ENCODE measurements at regions of chr6 and their contacts with region 1.

Region 1: GRCh38 chr6:28586962-28587745 is 61.5 kb downstream of the GPX5 start:
- DNase-seq: peak; percentile 87
- H3K4me3 Mint-ChIP-seq: peak overlapping the region; percentile 85
- H3K27ac Mint-ChIP-seq: peak overlapping the region; percentile 38
- H3K4me1 Mint-ChIP-seq: peaks cover 30% of the 10 kb centered on the region
- H3K27me3 Mint-ChIP-seq: peaks cover 63% of the 10 kb centered on the region

Region 2: GRCh38 chr6:28218271-28219248 is 368.6 kb before region 1 on chr6:
- intact Hi-C with region 1: loop called (anchors 5 kb)
- DNase-seq: peak; percentile 68
- H3K4me3 Mint-ChIP-seq: peak overlapping the region; percentile 82
- H3K27ac Mint-ChIP-seq: no peak overlapping the region
- H3K4me1 Mint-ChIP-seq: peaks cover 10% of the 10 kb centered on the region
- H3K27me3 Mint-ChIP-seq: peaks cover 67% of the 10 kb centered on the region

Region 3: GRCh38 chr6:28355743-28356665 is 231.2 kb before region 1 on chr6:
- intact Hi-C with region 1: no loop called
- DNase-seq: peak; percentile 91
- H3K4me3 Mint-ChIP-seq: peak overlapping the region; percentile 93
- H3K27ac Mint-ChIP-seq: peak overlapping the region; percentile 79
- H3K4me1 Mint-ChIP-seq: peaks cover 16% of the 10 kb centered on the region
- H3K27me3 Mint-ChIP-seq: no peaks in the 10 kb centered on the region

Region 4: DNA sequence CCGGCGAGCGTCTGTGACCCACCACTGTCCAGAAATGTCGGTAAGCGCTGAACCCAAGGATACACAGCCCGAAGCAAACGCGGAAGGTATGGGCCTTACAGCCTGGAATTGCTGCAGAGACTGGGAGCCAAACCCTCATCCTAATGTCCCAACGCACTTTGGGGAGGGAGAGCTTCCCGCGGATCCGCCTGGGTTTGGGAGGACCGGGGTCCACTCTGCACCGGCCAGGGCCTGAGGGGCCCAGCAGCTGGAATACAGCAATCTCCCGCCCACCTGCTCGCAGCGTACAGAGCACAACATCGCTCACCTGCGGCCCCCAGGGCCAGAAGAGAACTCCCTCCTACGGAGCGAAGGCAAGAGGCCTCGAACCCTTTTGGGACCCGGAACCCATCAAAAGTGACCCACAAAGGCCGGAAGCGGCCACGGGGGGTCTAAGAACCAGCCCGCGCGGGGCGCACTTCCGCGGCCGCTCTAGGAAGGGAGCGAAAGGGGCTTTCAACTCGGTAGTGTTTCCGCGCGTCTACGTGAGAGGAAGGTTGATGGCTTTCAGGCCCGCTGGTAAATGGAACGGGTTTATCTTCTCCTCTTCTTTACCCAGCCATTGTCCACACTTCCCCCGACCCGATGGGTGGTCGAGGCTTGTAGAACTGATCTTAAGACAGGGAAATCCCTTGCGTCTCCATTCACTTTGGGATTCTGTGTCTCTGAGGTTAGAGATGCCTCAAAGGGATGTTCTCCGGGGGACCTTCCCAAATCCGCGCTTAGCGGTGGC is 187.6 kb before region 1 on chr6 and contains the start of gene ZSCAN12:
- intact Hi-C with region 1: loop called (anchors 2 kb)
- DNase-seq: peak; percentile 95
- H3K4me3 Mint-ChIP-seq: peak within 1 kb of the TSS; percentile 93
- H3K27ac Mint-ChIP-seq: peak within 1 kb of the TSS; percentile 92
- H3K4me1 Mint-ChIP-seq: peaks cover 49% of the 10 kb centered on the region
- H3K27me3 Mint-ChIP-seq: peaks cover 23% of the 10 kb centered on the region
- total RNA-seq, gene ZSCAN12: 5.8 and 5.9 TPM in 2 replicates